GM13977 (cell line): ENCODE measurements at regions of chr17 and their contacts with region 1.

Region 1: DNA sequence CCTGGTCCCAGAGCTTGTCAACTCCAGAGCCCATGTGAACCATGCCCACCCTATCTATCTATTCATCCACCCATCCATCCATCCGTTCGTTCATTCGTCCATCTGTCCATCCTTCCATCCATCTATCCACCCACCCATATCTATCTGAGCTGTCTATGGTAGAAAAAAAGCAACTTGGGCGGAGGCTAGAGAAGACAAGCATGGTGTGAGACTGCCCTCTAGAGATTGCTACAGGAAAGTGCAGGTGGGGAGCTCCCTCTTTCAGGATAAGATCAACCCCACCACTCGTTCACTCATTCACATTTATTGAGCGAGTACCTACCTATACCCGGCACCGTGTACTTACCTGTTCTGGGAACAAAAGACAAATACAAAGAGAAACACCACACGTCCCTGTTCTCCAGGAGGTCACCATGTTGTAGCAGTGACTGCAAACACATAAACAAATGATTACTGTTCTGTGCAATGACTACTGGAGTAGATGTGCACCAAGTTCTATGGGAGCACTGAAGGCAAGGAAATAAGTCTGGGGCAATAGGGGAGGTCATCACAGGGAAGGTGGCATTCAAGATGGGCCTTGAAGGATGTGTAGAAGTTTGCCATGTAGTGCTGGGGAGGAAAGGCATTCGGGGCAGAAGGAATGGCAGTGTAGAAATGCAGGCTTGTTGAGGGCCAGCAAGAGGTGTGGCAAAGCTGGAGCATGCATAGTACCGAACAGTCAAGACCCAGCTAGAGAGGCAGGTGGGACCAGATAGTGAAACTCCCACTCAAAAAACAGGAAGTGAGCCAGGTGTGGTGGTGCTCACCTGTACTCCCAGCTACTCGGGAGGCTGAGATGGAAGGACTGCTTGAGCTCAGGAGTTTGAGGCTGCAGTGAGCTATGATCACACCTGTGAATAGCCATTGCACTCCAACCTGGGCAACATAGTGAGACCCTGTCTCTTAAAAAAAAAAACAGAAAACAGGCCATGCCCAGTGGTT is 13.4 kb upstream of the ATP5MC1 start:
- DNase-seq: peak; percentile 82
- CTCF ChIP-seq: peak; percentile 87

Region 2: DNA sequence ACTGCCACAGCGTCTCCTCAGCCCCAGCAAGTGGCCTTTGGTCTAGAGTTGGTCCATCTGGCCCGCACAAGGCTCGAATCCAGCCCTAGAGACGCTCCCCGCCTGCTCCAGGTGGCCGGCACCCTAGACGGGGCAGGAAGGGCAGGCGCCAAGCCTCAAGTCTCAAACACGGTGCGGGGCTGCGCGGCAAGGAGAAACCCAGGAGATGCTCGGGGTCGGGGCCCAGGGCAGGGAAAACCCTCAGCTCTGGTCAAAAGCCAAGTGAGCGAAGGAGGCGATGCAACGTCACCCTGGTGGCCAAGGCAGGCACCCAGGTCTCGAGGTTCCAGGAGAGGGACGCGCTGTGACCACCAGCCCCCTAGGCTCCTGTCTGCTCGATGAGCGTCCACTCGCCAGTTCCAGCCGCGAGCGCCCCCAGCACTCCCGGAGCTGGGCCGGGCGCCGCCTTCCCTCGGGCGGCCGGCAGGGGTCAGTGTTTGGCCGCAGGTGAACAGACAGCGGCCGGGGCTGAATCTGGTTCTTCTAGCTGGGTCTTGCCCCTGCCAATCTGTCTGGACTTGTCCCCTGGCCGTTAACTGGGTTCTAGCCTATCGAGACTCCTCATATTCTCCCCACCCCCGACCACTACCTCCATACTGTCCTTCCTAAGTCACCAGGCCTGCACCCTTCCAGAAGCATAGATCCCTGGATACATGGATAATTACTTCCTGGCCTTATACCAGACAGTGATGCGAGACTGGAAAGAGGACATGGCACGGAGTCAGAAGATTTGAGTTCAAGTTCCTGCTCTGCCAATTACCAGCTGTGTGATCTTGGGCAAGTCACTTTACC is 200.9 kb before region 1 on chr17:
- in situ Hi-C with region 1: loop called (anchors 25 kb)
- DNase-seq: peak; percentile 86
- CTCF ChIP-seq: peak; percentile 96

Region 3: DNA sequence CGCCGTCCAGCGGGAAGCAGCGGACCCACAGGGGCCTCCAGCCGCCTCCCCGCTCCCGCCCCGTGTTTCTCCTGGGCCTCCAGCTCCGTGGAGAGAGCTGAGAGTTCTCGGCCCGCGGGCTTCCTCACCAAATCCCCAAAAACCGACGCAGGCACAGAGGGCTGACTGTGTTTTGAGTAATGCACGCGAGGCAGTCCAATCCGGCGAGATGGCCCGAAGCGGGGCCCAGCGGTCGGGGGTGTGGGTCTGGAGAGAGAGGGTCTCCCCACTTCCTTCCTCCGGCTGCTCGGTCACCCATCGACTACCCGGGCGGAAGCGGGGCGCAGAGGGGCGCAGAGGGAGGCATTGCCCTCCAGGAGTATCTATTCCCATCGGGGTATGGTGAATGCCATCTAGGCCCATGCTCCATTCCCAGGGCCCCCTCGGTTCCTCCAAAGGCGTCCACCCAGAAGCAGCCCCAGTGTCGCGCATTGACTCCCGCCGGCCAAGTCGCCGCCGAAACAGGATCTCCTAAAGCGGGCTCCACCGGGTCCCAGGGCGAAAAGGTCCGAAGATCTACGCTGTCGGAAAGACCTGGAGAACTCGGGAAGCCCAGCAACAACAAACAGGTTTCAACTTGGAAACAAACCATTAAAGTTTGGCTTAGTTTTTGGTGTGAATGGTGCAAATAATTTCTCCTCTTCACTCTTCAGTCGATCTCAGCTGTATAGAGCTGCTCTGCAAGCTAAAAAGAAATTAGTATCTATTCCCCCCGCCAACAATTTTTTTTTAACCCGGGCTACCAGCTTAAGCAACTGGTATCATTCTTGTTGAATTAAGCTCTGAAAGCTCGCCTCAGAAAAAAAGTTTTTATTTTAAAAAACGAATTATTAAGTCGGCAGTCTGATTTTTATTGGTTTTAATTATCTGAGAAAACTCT is 131.5 kb before region 1 on chr17:
- in situ Hi-C with region 1: no loop called
- DNase-seq: no peak
- CTCF ChIP-seq: no peak

Region 4: DNA sequence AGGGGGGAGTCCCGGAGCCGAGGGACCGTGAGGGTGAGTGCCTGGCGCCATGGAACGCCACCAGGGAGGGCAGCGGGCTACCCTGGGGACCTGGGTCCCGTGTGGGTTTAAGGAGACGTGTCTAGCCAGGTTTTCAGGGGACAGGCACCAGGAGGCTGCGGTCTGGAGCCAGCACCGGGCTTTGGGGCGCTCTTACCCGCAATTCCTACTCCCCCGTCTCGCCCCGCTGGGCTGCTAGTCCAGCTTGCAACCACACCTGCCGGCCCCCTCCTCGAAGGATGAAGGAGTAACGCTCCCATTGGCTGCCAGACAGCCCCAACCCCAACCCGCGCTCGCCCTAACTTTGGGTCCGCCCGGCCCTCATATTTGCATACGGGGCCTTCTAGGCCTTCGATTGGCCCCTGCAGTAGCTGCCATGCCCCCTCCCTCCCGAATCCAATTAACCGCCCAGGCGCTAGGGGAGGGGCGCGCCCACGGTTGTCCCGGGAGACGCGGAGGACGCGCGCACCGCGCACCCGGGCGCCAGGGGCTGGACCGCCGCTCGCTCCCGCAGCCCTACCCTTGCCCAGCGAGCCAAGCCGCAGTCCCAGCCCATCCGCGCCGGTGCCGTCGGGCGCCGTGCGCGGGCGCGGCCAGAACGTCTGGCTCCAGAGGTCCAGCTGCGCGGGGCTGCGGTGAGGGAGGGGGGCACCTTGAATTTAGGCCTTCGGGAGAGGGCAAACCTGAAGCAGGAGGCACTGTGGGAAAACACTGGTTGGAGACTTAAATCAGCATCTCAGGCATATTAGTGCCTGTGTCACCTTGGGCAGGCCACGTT is 62.2 kb before region 1 on chr17 and contains the start of gene TTLL6:
- in situ Hi-C with region 1: loop called (anchors 5 kb)
- DNase-seq: peak; percentile 91
- CTCF ChIP-seq: no peak

Region 5: GRCh38 chr17:48944519-48945260 is 65.5 kb after region 1 on chr17 and contains the start of gene SNF8:
- in situ Hi-C with region 1: no loop called
- DNase-seq: peak; percentile 97
- CTCF ChIP-seq: no peak

Region 6: DNA sequence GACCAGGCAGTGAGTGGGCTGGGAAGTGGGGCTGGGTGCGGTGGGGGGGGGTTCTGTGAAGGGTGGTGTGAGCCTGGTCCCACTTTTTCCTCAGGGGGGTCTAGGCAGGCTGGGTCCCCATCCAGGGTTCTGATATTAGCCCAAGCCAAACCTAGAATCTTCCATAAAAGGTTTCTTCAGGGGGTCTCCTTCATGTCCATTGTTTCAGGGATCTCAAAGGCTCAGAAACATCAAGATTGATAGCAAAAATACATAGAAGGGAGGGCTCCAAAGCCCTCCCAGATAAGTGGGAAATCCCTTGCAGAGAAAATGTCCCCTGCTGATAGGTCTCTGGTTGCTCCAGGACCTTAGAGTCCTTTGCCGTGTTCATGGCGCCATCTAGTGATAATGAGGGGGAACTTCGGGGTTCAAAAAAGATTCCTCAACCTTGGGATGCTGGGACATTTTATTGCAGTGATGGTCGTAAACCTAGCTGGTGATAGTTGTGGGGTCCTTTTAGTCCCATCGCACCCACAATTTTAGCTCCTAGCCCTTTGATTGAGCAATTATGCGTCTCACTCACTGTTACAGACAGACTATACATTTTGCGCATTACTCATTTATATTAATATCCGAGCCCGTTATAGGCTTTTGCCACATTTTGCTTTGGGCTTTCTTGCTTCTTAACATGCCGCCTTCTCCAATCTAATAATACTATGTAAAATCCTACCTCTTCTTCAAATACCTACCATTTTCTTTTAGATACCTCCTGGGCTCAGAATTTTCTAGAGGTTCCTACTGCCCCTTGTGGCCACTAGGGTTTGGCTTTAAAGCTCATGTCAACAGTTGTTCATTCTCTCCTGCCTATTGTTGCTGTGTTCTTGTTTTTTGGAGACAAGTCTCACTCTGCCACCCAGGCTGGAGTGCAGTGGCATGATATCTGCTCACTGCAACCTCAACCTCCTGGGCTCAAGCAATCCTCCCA is 153.0 kb after region 1 on chr17:
- in situ Hi-C with region 1: loop called (anchors 10 kb)
- DNase-seq: peak; percentile 88
- CTCF ChIP-seq: peak; percentile 86